ENCODE measurements at regions of chr3 and their contacts with region 1.

Region 1: DNA sequence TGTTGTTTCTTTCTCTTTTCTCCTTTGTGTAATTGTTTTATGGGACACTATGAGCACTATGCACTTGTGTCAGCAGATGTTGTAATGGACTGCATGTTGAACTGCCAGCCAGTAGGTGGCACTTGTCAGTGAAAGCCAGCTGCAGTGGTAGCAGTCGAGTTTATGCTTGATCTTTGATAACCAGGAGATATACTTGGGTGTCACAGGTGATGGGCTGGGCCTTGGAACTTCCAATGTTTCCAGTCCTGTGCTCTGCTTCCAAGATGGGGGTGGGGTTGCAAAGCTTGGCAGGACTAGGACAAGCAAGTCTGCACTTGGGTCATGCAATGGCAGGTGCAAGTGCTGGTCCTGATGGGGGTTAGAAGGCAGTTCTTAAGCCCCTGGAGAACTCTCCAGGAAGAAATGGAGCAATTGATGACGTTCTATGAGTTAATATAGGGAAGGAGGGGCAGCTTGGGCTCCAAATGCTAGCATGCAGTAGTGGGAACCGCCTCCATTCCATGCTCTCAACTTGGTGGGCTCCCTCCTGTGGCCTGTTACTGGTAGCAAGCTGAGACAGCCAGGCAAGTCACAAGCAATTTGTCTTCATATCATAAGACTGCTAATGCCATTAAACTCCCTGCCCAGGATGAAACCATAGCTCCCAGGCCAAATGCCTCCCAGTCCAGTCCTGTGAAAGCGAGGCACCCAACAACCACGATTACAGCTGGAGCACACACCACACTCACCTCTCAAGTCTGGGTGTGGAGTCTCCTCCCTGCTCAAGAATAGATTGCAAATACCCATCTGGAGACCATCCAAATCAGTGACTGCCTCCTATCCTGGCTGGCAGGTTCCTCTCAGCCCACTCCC is 287.2 kb downstream of the CGGBP1 start:
- DNase-seq: no peak
- H3K4me3 ChIP-seq: no peak overlapping the region
- H3K27ac ChIP-seq: no peak overlapping the region
- H3K4me1 ChIP-seq: no peaks in the 10 kb centered on the region
- H3K27me3 ChIP-seq: no peaks in the 10 kb centered on the region
- CTCF ChIP-seq: peak; percentile 25 to 71 (median 57)
- POLR2A ChIP-seq: no peak

Region 2: DNA sequence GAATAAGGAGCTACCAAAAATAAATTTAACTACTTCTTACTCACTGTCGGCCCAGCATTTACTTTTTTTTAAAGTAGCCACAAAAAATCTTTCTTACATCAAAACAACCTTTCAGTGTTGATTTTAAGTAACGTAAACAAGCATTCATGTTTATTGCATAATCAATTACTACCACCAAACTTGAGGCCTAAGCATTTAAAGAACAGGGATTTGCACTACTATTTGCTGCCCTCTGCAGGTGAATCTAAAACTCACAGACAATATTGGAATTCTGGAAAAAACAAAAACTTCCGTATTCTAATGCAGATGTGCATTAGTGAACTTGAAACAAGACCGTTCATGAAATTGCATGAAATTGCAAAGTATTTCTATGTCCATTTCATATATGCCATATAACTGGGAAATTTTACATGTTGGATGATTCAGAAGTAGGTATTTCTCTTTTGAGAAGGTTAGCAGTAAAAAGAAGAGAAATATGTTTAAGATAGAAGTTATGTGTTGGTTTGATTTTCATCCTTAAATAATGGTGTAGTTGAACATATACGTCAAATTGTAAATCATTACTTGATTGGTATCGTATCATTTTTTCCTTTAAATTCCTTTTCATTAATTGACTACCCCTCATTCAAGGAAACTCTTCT is 231.7 kb after region 1 on chr3:
- intact Hi-C with region 1: loop called (anchors 10 kb)
- DNase-seq: no peak
- H3K4me3 ChIP-seq: no peak overlapping the region
- H3K27ac ChIP-seq: no peak overlapping the region
- H3K4me1 ChIP-seq: peaks cover 0 to 32% (median 8%) of the 10 kb centered on the region in 6 donors
- H3K27me3 ChIP-seq: no peaks in the 10 kb centered on the region
- CTCF ChIP-seq: peak in 10 of 11 experiments; percentile 38 to 74 (median 67)
- POLR2A ChIP-seq: no peak

Region 3: DNA sequence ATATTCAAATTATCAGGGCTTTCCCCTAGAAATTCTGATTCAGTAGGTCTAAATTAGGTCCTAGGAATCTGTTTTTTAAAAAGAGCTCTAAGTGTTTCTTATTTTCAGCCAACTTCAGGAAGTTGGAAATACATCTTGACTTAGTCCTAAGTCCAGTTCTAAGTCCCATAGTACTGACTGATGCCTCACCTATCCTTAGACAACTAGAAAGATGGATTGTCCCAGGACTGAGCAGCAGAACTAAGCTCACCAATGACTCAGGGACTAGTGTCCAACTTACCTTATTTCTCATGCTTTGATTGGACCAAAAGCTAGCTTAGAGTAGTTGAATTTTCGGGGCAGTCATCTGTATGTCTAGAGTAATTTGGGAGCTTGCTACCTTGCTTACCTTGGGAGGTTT is 352.0 kb after region 1 on chr3:
- intact Hi-C with region 1: loop called (anchors 10 kb)
- DNase-seq: no peak
- H3K4me3 ChIP-seq: no peak overlapping the region
- H3K27ac ChIP-seq: no peak overlapping the region
- H3K4me1 ChIP-seq: peaks cover 0 to 9% (median 0%) of the 10 kb centered on the region in 6 donors
- H3K27me3 ChIP-seq: no peaks in the 10 kb centered on the region
- CTCF ChIP-seq: no peak
- POLR2A ChIP-seq: no peak

Region 4: GRCh38 chr3:88863196-88863595 is 1091.6 kb after region 1 on chr3:
- intact Hi-C with region 1: no loop called
- DNase-seq: no peak
- H3K4me3 ChIP-seq: no peak overlapping the region
- H3K27ac ChIP-seq: no peak overlapping the region
- H3K4me1 ChIP-seq: no peaks in the 10 kb centered on the region
- H3K27me3 ChIP-seq: no peaks in the 10 kb centered on the region
- CTCF ChIP-seq: no peak
- POLR2A ChIP-seq: no peak